GM10248 (cell line): ENCODE measurements at regions of chr7 and their contacts with region 1.

Region 1: DNA sequence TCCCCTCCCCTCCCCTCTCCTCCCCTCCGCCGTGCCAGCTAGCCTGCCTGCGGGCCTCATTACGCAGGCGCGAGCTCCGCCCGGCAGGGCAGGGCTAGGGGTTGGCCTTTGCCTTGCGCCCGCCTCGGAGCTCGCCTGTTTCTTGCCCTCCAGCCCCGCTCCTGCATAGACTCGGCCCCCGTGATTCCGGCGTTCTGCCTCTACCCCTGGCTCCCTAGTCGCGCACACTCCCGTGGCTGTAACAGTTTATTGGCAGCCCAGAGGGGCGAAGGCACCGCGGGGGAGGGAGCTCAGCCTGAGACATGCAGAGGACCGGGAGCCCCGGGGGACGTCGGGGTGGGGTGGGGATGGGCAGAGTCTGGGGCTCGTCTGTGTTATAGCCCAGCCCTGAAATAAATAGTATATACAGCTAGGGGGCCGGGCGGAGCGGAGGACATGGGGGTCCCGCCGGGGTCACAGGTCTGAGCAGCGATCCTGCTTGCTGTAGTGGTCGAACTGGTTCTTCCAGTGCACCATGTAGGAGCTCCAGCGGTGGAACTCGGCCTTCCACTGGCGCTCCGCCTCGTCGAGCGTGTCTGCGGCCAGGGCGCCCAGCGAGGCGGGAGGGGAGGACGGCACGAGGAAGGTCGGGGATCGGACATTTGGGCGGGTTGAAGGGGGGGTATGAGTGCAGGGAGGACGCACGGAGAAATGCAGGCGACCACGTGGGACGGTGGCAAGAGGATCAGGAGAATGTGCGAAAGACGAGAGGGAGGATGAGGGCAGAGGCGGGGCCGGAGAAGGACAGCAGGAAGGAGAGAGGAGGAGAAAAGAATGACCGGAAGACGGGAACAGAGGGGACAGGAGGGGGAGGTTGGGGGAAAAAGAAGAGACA is 483 bp upstream of the UFSP1 start:
- DNase-seq: peak; percentile 99
- CTCF ChIP-seq: no peak

Region 2: DNA sequence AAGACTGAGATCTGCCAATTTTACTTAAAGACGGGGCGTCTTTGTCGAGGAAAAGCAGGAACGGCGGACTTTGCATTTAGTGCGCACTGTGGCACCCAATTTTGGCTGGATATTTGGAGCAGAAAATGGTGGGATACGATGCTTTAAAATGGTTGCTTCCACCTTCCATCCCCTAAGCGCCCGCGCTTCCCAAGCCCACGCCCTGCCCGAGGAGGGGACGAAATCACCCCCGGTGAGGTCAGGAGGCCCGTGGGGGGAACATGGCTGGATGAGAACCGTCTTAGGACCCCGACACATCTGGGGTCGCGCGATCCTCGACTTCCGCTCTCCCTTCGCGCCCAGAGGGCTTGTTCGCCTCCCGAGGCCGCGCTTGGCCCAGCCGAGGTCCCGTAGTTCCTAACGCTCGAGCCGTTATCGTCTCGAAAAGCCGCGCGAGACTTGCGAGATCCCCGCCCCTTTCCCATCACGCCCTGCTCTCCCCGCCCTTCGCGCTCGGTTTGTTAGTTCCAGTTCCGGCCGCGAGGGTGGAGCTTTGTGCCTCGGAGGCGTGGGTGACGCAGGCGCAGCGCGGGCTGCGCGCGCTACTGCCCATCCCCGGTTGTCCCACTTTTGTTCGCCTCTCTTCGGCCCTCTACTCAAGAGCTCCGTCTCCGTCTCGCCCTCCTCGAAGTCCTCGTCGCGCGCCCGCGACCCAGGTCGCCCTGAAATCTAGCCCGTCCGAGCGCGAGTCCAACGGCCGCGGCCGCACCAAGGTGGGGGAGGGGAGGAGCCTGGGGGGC is 15.2 kb before region 1 on chr7 and contains the start of gene SRRT:
- CTCF ChIA-PET with region 1: interaction called, 15 read pairs
- POLR2A ChIA-PET with region 1: interaction called, 46 read pairs
- DNase-seq: peak; percentile 99
- CTCF ChIP-seq: no peak

Region 3: GRCh38 chr7:100921039-100921438 is 31.0 kb after region 1 on chr7:
- CTCF ChIA-PET with region 1: no interaction called
- POLR2A ChIA-PET with region 1: no interaction called
- DNase-seq: no peak
- CTCF ChIP-seq: no peak

Region 4: GRCh38 chr7:101159696-101160654 is 270.0 kb after region 1 on chr7:
- CTCF ChIA-PET with region 1: no interaction called
- POLR2A ChIA-PET with region 1: no interaction called
- DNase-seq: no peak
- CTCF ChIP-seq: no peak